ENCODE measurements at regions of chr14 and their contacts with region 1.

Region 1: GRCh38 chr14:59483900-59484638 is at the starts of genes JKAMP and L3HYPDH:
- DNase-seq: peak; percentile 99
- ATAC-seq: peak; percentile 98
- H3K4me3 ChIP-seq: peak within 1 kb of the TSS; percentile 16 to 73
- H3K27ac ChIP-seq: peak within 1 kb of the TSS; percentile 38 to 86
- H3K4me1 ChIP-seq: peaks cover 0 to 2% of the 10 kb centered on the region in 2 donors
- H3K27me3 ChIP-seq: no peaks in the 10 kb centered on the region
- total RNA-seq, gene JKAMP: 29.2 to 31.9 TPM
- total RNA-seq, gene L3HYPDH: 31.4 to 53.1 TPM

Region 2: DNA sequence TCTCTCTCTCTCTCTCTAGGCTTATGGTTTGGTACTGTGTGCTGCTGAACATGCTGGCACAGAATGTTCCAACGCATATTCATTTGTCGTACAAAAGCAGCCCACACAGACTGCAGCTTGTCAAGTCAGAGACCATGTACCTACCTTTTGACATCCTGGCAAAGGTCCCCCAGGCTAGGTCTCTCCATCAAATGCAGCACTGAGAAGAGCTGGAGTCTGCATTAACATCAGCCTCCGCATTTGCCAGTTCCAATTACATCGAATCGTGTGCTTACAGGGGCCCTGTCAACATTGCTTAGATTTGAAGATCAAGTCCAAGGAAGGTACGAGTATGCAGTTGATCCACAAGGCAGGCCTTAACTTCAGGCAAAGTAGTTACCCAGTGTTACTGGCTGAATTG is 66.8 kb before region 1 on chr14:
- intact Hi-C with region 1: no loop called
- DNase-seq: no peak
- ATAC-seq: no peak
- H3K4me3 ChIP-seq: no peak overlapping the region
- H3K27ac ChIP-seq: no peak overlapping the region
- H3K4me1 ChIP-seq: peaks cover 0 to 7% of the 10 kb centered on the region in 2 donors
- H3K27me3 ChIP-seq: no peaks in the 10 kb centered on the region

Region 3: GRCh38 chr14:59465316-59466135 is 18.5 kb before region 1 on chr14 and contains the start of gene GPR135:
- intact Hi-C with region 1: loop called in 1 of 2 experiments (anchors 2 kb)
- DNase-seq: peak in 1 of 2 donors; percentile 90
- ATAC-seq: peak; percentile 82
- H3K4me3 ChIP-seq: peak within 1 kb of the TSS; percentile 56 to 81
- H3K27ac ChIP-seq: peak within 1 kb of the TSS; percentile 24 to 49
- H3K4me1 ChIP-seq: peaks cover 0 to 2% of the 10 kb centered on the region in 2 donors
- H3K27me3 ChIP-seq: no peaks in the 10 kb centered on the region
- total RNA-seq, gene GPR135: 7.4 to 9.0 TPM

Region 4: GRCh38 chr14:59679872-59680271 is 195.8 kb after region 1 on chr14:
- intact Hi-C with region 1: loop called (anchors 5 to 10 kb)
- DNase-seq: no peak
- ATAC-seq: peak; percentile 75
- H3K4me3 ChIP-seq: no peak overlapping the region
- H3K27ac ChIP-seq: peak overlapping the region in 1 of 2 donors; percentile 57
- H3K4me1 ChIP-seq: peaks cover 2 to 15% of the 10 kb centered on the region in 2 donors
- H3K27me3 ChIP-seq: no peaks in the 10 kb centered on the region

Region 5: DNA sequence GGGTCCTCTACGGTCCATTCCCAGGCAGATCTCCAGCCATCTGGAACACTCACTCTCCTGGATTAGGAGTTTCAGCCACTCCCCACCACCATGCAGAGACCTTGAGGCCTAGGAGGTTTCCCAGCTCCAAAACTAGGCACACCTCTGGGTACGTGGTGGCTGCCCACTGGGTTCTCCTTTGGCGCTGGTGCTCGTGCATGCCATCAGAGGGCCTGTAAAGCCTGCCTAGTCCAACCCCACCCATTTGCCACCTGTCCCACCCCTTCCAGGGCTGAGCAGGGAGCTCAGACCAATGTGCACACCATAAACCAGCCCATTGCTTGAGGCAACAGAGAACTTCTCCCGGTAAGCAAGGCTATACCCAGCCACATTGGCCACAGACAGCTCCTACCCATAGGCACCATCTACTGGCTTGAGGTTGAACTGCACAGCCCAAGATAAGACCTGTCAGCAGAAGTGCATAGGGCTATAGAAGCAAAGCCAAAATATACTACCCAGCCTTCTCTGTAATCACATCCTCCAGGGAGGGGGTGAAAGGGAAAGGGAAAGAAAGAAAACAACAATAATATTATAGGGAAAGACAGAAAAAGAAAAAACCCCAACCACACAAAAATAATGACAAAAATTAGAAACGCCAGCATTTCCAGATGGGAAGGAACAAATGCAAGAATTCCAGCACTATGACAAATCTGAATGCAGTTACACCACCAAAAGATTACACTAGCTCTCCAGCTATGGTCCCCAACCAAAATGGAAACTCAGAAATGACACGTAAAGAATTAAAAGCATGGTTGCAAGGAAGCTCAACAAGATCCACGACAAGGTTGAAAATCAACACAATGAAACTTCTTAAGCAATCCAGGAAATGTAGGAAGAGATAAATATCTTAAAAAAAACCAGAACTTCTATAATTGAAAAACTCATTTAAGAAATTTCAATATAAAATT is 204.4 kb after region 1 on chr14:
- intact Hi-C with region 1: loop called in 1 of 2 experiments (anchors 10 kb)
- DNase-seq: peak in 1 of 2 donors; percentile 75
- ATAC-seq: peak; percentile 75
- H3K4me3 ChIP-seq: no peak overlapping the region
- H3K27ac ChIP-seq: no peak overlapping the region
- H3K4me1 ChIP-seq: no peaks in the 10 kb centered on the region
- H3K27me3 ChIP-seq: no peaks in the 10 kb centered on the region